Naive thymus-derived CD4-positive, alpha-beta T cell (primary cell): ENCODE measurements at regions of chr16 and their contacts with region 1.

Region 1: GRCh38 chr16:58336332-58337089 is 41.7 kb upstream of the PRSS54 start:
- DNase-seq: peak; percentile 58 to 85 (median 77)
- ATAC-seq: peak; percentile 93
- H3K4me3 ChIP-seq: no peak overlapping the region
- H3K4me3 Mint-ChIP-seq: peak overlapping the region in 8 of 10 donors; percentile 18 to 74 (median 67)
- H3K27ac ChIP-seq: no peak overlapping the region
- H3K27ac Mint-ChIP-seq: no peak overlapping the region
- H3K4me1 ChIP-seq: no peaks in the 10 kb centered on the region
- H3K4me1 Mint-ChIP-seq: peaks cover 0 to 8% (median 5%) of the 10 kb centered on the region in 7 donors
- H3K27me3 ChIP-seq: no peaks in the 10 kb centered on the region
- H3K27me3 Mint-ChIP-seq: peaks cover 0 to 12% (median 5%) of the 10 kb centered on the region in 5 donors

Region 2: GRCh38 chr16:58385218-58385773 is 48.8 kb after region 1 on chr16:
- CTCF ChIA-PET with region 1: no interaction called
- POLR2A ChIA-PET with region 1: no interaction called
- intact Hi-C with region 1: no loop called
- DNase-seq: no peak
- ATAC-seq: no peak
- H3K4me3 ChIP-seq: no peak overlapping the region
- H3K4me3 Mint-ChIP-seq: no peak overlapping the region
- H3K27ac ChIP-seq: no peak overlapping the region
- H3K27ac Mint-ChIP-seq: no peak overlapping the region
- H3K4me1 ChIP-seq: no peaks in the 10 kb centered on the region
- H3K4me1 Mint-ChIP-seq: peaks cover 0 to 3% (median 0%) of the 10 kb centered on the region in 7 donors
- H3K27me3 ChIP-seq: no peaks in the 10 kb centered on the region
- H3K27me3 Mint-ChIP-seq: peaks cover 13 to 26% (median 18%) of the 10 kb centered on the region in 5 donors

Region 3: DNA sequence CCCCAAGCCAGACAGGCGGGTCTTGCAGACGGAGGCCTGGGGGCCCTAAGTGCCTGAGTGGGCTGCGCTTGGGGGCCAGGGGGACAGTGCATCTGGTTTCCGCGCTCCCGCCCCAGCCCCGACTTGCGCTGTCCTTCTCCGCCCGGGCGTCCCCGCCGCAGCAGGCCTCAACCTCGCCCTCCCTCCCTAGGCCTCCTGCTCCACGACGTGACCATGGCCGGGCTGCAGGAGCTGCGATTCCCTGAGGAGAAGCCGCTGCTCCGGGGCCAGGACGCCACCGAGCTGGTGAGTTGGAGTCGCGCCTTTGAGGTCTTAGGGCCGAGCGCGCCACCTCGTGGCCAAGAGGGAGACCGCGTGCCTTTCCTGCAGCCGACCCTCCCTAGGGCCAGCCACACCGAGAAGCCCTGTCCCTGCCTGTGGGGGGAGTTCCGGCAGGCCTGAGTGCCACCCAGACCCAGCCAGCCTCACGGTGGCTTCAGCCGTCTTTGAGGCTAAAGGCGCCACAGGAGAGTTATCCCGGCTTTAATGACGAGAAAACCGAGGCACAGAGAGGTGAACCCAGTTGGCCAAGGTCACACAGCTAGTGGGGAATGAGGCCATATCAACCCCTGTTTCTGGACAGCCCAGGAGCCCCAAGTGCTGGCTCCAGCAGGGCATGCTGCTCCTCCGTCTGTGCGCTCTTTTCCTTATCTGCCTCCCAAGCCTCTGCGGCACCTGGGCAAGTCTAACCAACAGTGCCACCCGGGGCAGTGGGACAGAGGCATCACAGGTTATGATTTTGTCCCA is 151.2 kb after region 1 on chr16:
- CTCF ChIA-PET with region 1: interaction called, 56 read pairs
- POLR2A ChIA-PET with region 1: no interaction called
- intact Hi-C with region 1: loop called (anchors 1 kb)
- DNase-seq: peak; percentile 44 to 76 (median 65)
- ATAC-seq: peak; percentile 88
- H3K4me3 ChIP-seq: no peak overlapping the region
- H3K4me3 Mint-ChIP-seq: peak overlapping the region in 4 of 10 donors; percentile 16 to 42 (median 32)
- H3K27ac ChIP-seq: no peak overlapping the region
- H3K27ac Mint-ChIP-seq: no peak overlapping the region
- H3K4me1 ChIP-seq: no peaks in the 10 kb centered on the region
- H3K4me1 Mint-ChIP-seq: peaks cover 0 to 3% (median 0%) of the 10 kb centered on the region in 7 donors
- H3K27me3 ChIP-seq: no peaks in the 10 kb centered on the region
- H3K27me3 Mint-ChIP-seq: peaks cover 0 to 15% (median 9%) of the 10 kb centered on the region in 5 donors

Region 4: GRCh38 chr16:58661199-58661830 is 324.8 kb after region 1 on chr16:
- CTCF ChIA-PET with region 1: no interaction called
- POLR2A ChIA-PET with region 1: no interaction called
- intact Hi-C with region 1: loop called in 1 of 2 experiments (anchors 10 kb)
- DNase-seq: peak in 1 of 9 donors; percentile 13
- ATAC-seq: peak; percentile 86
- H3K4me3 ChIP-seq: no peak overlapping the region
- H3K4me3 Mint-ChIP-seq: no peak overlapping the region
- H3K27ac ChIP-seq: no peak overlapping the region
- H3K27ac Mint-ChIP-seq: no peak overlapping the region
- H3K4me1 ChIP-seq: no peaks in the 10 kb centered on the region
- H3K4me1 Mint-ChIP-seq: no peaks in the 10 kb centered on the region
- H3K27me3 ChIP-seq: no peaks in the 10 kb centered on the region
- H3K27me3 Mint-ChIP-seq: no peaks in the 10 kb centered on the region